CD4-positive, alpha-beta memory T cell (primary cell): ENCODE measurements at regions of chr10 and their contacts with region 1.

Region 1: GRCh38 chr10:71708301-71708703 is 11.3 kb downstream of the C10orf105 start:
- DNase-seq: peak in 4 of 5 donors; percentile 51 to 66 (median 59)
- H3K4me3 ChIP-seq: no peak overlapping the region
- H3K4me3 Mint-ChIP-seq: peak overlapping the region in 3 of 8 donors; percentile 25 to 34 (median 29)
- H3K27ac ChIP-seq: no peak overlapping the region
- H3K27ac Mint-ChIP-seq: peak overlapping the region in 4 of 7 donors; percentile 18 to 52 (median 20)
- H3K4me1 ChIP-seq: peaks cover 27% of the 10 kb centered on the region
- H3K4me1 Mint-ChIP-seq: peaks cover 27 to 49% (median 38%) of the 10 kb centered on the region in 4 donors
- H3K27me3 ChIP-seq: no peaks in the 10 kb centered on the region
- H3K27me3 Mint-ChIP-seq: no peaks in the 10 kb centered on the region

Region 2: DNA sequence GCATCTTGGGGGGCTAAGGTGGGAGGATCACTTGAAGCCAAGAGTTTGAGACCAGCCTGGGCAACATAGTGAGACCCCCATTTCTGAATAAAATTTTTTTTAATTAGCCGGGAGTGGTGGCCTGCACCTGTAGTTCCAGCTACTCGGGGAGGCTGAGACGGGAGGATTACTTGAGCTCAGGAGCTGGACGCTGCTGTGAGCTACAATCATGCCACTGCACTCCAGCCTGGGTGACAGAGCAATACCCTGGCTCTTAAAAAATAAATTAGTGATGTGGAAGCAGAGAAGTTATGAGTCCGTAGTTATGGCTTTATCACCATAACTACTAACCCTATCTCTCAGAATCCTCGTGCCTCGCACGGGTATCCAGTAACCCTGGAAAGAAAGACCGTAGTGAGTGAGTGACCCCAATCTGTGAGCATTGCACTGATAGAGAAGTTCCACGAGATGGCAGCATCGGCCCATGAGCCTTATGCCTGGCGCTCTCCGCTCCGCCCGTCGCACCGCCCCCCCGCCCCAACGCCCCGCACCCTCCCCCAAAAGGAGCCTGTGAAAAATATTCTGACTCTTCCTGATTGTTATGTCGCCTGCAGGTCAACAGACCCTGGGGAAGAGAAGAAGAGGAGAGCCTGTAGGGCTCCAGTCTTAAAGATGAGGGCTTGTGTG is 394.1 kb before region 1 on chr10:
- CTCF ChIA-PET with region 1: interaction called, 32 read pairs
- POLR2A ChIA-PET with region 1: interaction called, 11 read pairs
- intact Hi-C with region 1: loop called (anchors 2 kb)
- DNase-seq: peak; percentile 42 to 54 (median 48)
- H3K4me3 ChIP-seq: no peak overlapping the region
- H3K4me3 Mint-ChIP-seq: no peak overlapping the region
- H3K27ac ChIP-seq: no peak overlapping the region
- H3K27ac Mint-ChIP-seq: no peak overlapping the region
- H3K4me1 ChIP-seq: peaks cover 11% of the 10 kb centered on the region
- H3K4me1 Mint-ChIP-seq: peaks cover 6 to 18% (median 12%) of the 10 kb centered on the region in 4 donors
- H3K27me3 ChIP-seq: no peaks in the 10 kb centered on the region
- H3K27me3 Mint-ChIP-seq: peaks cover 4 to 7% of the 10 kb centered on the region in 2 donors

Region 3: DNA sequence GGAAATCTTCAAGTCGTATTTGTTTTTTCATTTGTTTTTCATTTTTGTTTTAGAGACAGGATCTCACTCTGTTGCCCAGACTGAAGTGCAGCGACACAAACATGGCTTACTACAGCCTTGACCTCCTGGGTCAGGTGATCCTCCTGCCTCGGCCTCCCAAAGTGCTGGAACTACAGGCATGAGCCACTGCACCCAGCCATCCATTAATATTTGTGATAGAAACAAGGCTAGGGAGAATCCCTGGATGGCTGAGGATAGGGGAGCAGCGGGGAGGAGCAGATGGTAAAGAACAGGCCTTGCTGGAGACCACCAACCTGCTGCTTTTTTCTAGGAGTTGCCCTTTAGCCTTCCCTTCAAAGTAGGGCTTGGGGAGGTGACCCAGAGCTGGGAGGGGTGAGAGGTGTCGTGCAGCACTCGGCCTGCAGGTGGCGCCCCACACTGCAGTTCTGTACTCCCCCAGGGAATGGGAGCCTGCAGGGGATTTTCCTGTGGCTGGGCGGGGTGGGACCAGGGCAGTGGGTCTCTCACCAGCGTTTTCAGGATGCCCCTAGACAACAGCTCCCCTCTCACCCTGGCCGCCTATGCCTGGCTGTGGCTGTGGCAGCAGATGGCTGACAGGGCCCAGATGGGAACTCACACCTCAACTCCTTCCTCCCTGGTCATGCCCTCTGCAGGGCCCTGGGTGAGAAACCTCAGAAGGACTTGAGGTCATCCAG is 324.2 kb before region 1 on chr10:
- CTCF ChIA-PET with region 1: interaction called, 14 read pairs
- POLR2A ChIA-PET with region 1: interaction called, 3 read pairs
- intact Hi-C with region 1: loop called (anchors 1 kb)
- DNase-seq: peak; percentile 56 to 67 (median 60)
- H3K4me3 ChIP-seq: no peak overlapping the region
- H3K4me3 Mint-ChIP-seq: no peak overlapping the region
- H3K27ac ChIP-seq: no peak overlapping the region
- H3K27ac Mint-ChIP-seq: no peak overlapping the region
- H3K4me1 ChIP-seq: no peaks in the 10 kb centered on the region
- H3K4me1 Mint-ChIP-seq: peaks cover 0 to 3% (median 0%) of the 10 kb centered on the region in 4 donors
- H3K27me3 ChIP-seq: no peaks in the 10 kb centered on the region
- H3K27me3 Mint-ChIP-seq: peaks cover 2 to 3% of the 10 kb centered on the region in 2 donors

Region 4: DNA sequence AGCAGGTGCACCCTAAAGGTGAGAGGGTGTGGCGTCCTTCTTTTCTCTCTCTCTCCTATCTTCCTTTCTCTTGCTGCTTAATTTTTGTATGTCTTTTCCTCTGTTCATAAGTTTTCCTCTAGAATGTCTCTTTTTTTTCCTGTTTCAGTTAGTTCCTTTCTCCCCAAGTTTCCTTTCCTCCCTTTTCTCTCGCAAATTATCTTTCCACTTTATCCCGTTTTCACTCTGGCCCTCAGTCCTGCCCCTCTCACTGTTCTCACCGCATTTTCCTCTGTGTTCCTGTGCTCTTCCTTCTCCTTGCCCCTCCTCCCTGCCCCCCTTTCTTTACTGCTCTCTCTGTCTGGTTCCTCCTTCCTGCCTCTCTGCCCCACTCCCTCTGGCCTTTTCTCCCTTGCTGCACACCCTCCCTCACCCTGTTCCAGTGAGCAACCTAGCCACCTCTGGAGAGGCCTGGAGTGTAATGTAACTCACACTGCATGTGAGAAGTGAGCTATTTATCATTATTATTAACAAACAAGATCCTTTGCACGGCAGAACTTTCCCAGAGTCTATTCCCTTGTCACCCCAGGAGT is 147.2 kb before region 1 on chr10:
- CTCF ChIA-PET with region 1: no interaction called
- POLR2A ChIA-PET with region 1: no interaction called
- intact Hi-C with region 1: no loop called
- DNase-seq: no peak
- H3K4me3 ChIP-seq: no peak overlapping the region
- H3K4me3 Mint-ChIP-seq: peak overlapping the region in 1 of 8 donors; percentile 45
- H3K27ac ChIP-seq: no peak overlapping the region
- H3K27ac Mint-ChIP-seq: peak overlapping the region in 2 of 7 donors; percentile 6 to 10
- H3K4me1 ChIP-seq: no peaks in the 10 kb centered on the region
- H3K4me1 Mint-ChIP-seq: no peaks in the 10 kb centered on the region
- H3K27me3 ChIP-seq: no peaks in the 10 kb centered on the region
- H3K27me3 Mint-ChIP-seq: peaks cover 15 to 19% of the 10 kb centered on the region in 2 donors

Region 5: DNA sequence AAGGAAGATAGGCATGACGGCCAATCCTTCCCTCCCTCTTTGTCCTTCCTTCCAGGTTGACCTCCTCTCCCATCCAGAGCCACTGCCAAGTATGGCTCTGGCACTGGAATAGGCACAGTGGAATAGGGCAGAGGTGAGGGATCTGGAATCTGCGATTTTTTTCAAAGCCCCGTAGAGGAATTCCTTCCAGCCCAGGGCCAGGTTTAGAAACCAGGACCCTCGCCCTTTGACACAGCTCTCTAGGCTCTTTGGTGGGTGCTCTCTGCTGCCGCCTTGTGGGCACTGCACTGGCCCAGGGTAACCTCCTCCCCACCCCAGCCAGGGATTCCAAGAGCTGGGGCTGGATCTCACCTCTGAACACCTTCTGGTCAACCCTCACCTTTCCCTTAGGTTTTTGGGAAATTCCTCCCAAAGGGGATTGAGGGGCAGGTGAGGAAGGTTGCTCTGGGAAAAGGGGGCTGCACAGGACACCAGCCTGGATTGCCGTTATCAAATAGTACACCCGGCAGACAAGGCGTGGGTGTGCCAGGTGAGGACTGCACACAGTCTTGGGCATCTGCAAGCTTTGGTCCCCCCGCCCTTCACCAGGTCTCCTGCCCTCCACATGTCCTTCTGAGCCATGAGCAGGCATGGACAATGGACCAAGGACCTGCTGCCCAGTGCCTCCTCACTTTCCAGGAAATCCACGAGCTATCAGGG is 11.5 kb before region 1 on chr10:
- CTCF ChIA-PET with region 1: interaction called, 143 read pairs
- POLR2A ChIA-PET with region 1: interaction called, 8 read pairs
- intact Hi-C with region 1: no loop called
- DNase-seq: peak; percentile 54 to 60 (median 56)
- H3K4me3 ChIP-seq: no peak overlapping the region
- H3K4me3 Mint-ChIP-seq: peak overlapping the region in 1 of 8 donors; percentile 10
- H3K27ac ChIP-seq: no peak overlapping the region
- H3K27ac Mint-ChIP-seq: peak overlapping the region in 3 of 7 donors; percentile 24 to 57 (median 46)
- H3K4me1 ChIP-seq: peaks cover 51% of the 10 kb centered on the region
- H3K4me1 Mint-ChIP-seq: peaks cover 23 to 60% (median 35%) of the 10 kb centered on the region in 4 donors
- H3K27me3 ChIP-seq: no peaks in the 10 kb centered on the region
- H3K27me3 Mint-ChIP-seq: no peaks in the 10 kb centered on the region

Region 6: GRCh38 chr10:71727738-71728737 is 19.7 kb after region 1 on chr10:
- CTCF ChIA-PET with region 1: interaction called, 177 read pairs
- POLR2A ChIA-PET with region 1: interaction called, 196 read pairs
- intact Hi-C with region 1: loop called (anchors 1 kb)
- DNase-seq: peak; percentile 84 to 91 (median 88)
- H3K4me3 ChIP-seq: peak overlapping the region in 1 of 2 donors; percentile 49
- H3K4me3 Mint-ChIP-seq: peak overlapping the region; percentile 75 to 87 (median 80)
- H3K27ac ChIP-seq: peak overlapping the region; percentile 73
- H3K27ac Mint-ChIP-seq: peak overlapping the region; percentile 96 to 99 (median 98)
- H3K4me1 ChIP-seq: peaks cover 97% of the 10 kb centered on the region
- H3K4me1 Mint-ChIP-seq: peaks cover 54 to 95% (median 76%) of the 10 kb centered on the region in 4 donors
- H3K27me3 ChIP-seq: no peaks in the 10 kb centered on the region
- H3K27me3 Mint-ChIP-seq: no peaks in the 10 kb centered on the region

Region 7: DNA sequence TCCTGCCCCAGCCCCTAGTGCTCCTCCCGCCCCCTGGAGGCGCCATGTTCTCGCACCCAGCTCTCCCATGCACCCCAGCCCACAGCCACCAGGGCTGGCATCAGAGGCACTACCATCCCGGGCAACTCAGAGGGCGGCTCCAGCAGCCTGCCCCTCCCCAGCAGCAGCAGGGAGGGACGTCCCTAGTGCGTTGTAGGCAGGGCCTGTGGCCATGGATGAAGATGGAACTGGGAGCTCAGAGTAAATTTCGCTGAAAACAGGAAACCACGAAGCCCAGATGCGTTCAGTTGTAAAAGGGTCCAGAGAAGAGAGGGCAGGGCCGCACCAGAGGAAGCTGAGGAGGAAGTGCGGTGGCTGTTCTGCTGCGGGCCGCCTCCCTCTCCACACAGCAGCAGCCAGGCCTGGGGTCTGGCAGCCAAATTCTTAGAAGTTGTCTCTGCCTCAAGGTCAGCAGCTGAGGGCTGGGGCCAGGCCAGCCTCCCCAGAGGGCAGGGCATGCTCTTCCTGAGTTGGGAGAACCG is 40.4 kb after region 1 on chr10:
- CTCF ChIA-PET with region 1: interaction called, 17 read pairs
- POLR2A ChIA-PET with region 1: interaction called, 1,191 read pairs
- intact Hi-C with region 1: no loop called
- DNase-seq: peak; percentile 86 to 90 (median 87)
- H3K4me3 ChIP-seq: peak overlapping the region in 1 of 2 donors; percentile 39
- H3K4me3 Mint-ChIP-seq: peak overlapping the region; percentile 76 to 89 (median 84)
- H3K27ac ChIP-seq: peak overlapping the region; percentile 58
- H3K27ac Mint-ChIP-seq: peak overlapping the region; percentile 92 to 99 (median 98)
- H3K4me1 ChIP-seq: peaks cover 100% of the 10 kb centered on the region
- H3K4me1 Mint-ChIP-seq: peaks cover 74 to 98% (median 92%) of the 10 kb centered on the region in 4 donors
- H3K27me3 ChIP-seq: no peaks in the 10 kb centered on the region
- H3K27me3 Mint-ChIP-seq: no peaks in the 10 kb centered on the region

Region 8: DNA sequence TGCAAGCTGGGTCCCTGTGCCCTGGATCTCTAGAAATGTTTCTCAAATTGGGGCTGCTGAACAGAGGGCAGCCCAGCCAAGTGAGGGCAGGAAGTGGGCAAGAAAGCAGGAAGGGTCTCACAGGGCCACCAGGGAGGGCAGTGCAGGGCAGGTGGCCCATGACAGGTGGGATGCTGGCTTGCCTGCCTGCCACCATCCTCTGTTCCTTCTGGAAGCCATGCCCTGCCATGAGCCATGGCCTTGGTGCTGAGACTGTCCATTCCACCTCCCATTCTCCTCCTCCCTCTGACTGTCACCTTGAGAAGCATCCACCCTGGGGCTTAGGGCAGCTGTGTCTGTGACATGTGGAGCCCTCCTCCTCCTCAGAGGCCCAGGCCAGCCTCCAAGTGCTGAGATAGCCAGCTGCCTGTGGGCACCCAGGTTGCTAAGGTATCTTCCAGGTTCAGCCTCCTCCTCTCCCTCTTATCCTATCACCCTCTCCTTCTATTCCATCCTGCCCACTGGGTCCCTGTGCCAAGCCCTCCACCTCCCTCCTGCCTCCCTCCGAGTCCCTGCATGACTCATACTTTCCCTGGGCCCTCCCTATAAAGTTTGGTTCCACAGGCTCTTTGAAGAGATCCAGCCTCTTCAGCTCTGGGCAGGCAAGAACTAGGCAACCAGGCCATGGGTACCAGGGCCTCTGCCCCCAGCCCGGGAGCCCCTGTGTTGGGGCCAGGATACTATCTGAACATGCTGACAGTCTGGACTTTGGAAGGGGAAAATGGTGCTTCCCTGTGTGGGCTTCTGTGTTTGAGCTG is 63.7 kb after region 1 on chr10:
- CTCF ChIA-PET with region 1: interaction called, 379 read pairs
- POLR2A ChIA-PET with region 1: interaction called, 62 read pairs
- intact Hi-C with region 1: no loop called
- DNase-seq: peak in 1 of 5 donors; percentile 82
- H3K4me3 ChIP-seq: peak overlapping the region; percentile 84 to 95
- H3K4me3 Mint-ChIP-seq: peak overlapping the region; percentile 95 to 97 (median 95)
- H3K27ac ChIP-seq: peak overlapping the region; percentile 93
- H3K27ac Mint-ChIP-seq: peak overlapping the region; percentile 92 to 99 (median 95)
- H3K4me1 ChIP-seq: peaks cover 84% of the 10 kb centered on the region
- H3K4me1 Mint-ChIP-seq: peaks cover 55 to 91% (median 69%) of the 10 kb centered on the region in 4 donors
- H3K27me3 ChIP-seq: no peaks in the 10 kb centered on the region
- H3K27me3 Mint-ChIP-seq: no peaks in the 10 kb centered on the region